ENCODE measurements at regions of chr6 and their contacts with region 1.

Region 1: GRCh38 chr6:34236131-34236996 is at the start of gene HMGA1:
- DNase-seq: peak; percentile 97
- H3K4me3 ChIP-seq: peak within 1 kb of the TSS; percentile 97
- H3K27ac ChIP-seq: peak within 1 kb of the TSS; percentile 91
- H3K4me1 ChIP-seq: peaks cover 42% of the 10 kb centered on the region
- CTCF ChIP-seq: no peak
- total RNA-seq, gene HMGA1: 435 and 463 TPM in 2 replicates

Region 2: GRCh38 chr6:34132486-34133185 is 103.7 kb before region 1 on chr6:
- CTCF ChIA-PET with region 1: no interaction called
- POLR2A ChIA-PET with region 1: no interaction called
- intact Hi-C with region 1: no loop called
- DNase-seq: peak; percentile 52
- H3K4me3 ChIP-seq: no peak overlapping the region
- H3K27ac ChIP-seq: no peak overlapping the region
- H3K4me1 ChIP-seq: no peaks in the 10 kb centered on the region
- CTCF ChIP-seq: no peak

Region 3: GRCh38 chr6:34196126-34196830 is 40.1 kb before region 1 on chr6:
- CTCF ChIA-PET with region 1: no interaction called
- POLR2A ChIA-PET with region 1: interaction called, 3 read pairs
- intact Hi-C with region 1: loop called (anchors 2 kb)
- DNase-seq: peak; percentile 79
- H3K4me3 ChIP-seq: peak overlapping the region; percentile 43
- H3K27ac ChIP-seq: no peak overlapping the region
- H3K4me1 ChIP-seq: peaks cover 7% of the 10 kb centered on the region
- CTCF ChIP-seq: peak; percentile 90

Region 4: GRCh38 chr6:34223956-34224940 is 12.1 kb before region 1 on chr6:
- CTCF ChIA-PET with region 1: interaction called, 5 read pairs
- POLR2A ChIA-PET with region 1: interaction called, 11 read pairs
- intact Hi-C with region 1: no loop called
- DNase-seq: peak; percentile 91
- H3K4me3 ChIP-seq: peak overlapping the region; percentile 69
- H3K27ac ChIP-seq: peak overlapping the region; percentile 56
- H3K4me1 ChIP-seq: peaks cover 37% of the 10 kb centered on the region
- CTCF ChIP-seq: no peak

Region 5: DNA sequence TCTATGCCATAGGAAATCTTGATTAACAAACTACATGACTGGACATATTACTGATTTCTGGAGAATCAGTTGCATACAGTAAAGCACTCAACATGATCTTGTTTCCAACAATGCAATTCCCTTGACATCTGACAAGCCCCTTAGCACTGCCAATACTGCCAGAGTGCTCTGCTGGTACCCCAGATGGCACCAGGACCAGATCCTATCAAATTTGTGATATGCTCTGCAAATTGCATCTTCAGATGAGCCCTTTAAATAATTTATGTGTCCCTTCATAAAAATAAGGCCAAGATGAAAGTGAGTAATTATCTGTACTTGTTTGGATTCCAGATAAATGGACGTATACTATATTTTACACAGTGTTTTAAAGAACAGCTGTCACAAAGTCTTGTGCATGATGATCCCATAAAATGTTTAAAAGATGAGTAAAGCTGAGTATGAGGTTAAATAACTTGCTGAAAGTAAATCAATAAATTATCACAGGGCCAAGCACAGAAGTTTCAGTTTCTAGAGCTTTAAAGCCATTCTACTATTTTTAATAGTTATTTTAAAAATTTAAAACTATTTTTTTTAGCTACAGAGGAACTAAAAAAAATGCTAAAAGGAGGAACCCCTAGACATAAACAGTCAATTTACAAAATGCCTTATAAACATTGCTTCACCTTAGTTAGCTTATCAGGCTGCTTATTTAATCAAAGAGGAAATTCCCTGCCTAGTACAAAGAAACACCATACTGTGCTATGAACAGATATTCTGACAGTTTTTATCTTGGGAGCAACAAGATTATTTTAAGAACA is 114.0 kb after region 1 on chr6:
- CTCF ChIA-PET with region 1: no interaction called
- POLR2A ChIA-PET with region 1: no interaction called
- intact Hi-C with region 1: no loop called
- DNase-seq: no peak
- H3K4me3 ChIP-seq: no peak overlapping the region
- H3K27ac ChIP-seq: no peak overlapping the region
- H3K4me1 ChIP-seq: peaks cover 24% of the 10 kb centered on the region
- CTCF ChIP-seq: no peak

Measured in OCI-LY7 (cell line).